H1 (cell line): ENCODE measurements at regions of chr3 and their contacts with region 1.

Region 1: DNA sequence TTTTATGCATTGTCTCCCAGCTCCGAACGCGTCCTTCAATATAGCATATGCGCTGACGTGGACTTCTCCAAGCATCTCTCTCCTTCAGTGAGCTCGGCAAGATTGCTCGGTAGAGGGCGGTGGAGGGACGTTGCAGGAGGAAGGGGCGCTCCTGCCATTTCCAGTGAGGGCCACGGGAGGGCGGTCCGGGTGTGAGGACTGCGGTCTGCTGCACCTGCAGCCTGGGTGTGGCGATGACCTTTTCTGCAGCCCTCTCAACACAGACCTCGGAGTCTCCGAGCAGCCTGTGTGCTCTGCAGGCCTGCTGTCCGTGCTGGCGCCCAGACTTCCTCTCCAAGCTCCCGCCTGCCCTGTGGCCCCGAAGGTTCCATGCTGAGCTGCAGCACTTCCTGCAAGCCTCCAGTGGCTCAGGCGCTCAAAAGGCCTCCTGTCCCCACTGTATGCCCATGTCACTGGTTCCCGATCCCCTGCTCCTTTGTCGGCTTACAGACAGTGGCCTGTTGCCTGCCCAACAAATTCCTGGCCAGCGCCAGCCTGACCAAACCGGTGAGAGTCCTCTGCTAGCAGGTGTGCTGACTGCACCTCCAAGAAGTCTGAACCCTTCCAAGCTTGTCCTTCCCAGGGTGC is 8.9 kb upstream of the RTP3 start:
- DNase-seq: peak; percentile 92 to 98
- H3K4me3 ChIP-seq: no peak overlapping the region
- H3K27ac ChIP-seq: no peak overlapping the region
- H3K4me1 ChIP-seq: peaks cover 4 to 8% (median 6%) of the 10 kb centered on the region in 4 experiments; a peak in 6 of 7 replicates
- H3K27me3 ChIP-seq: no peaks in the 10 kb centered on the region; a peak in 2 of 7 replicates
- CTCF ChIP-seq: peak; percentile 100
- EP300 ChIP-seq: peak; percentile 10 to 47; a peak in 2 of 3 replicates
- POLR2A ChIP-seq: no peak
- RAD21 ChIP-seq: peak; percentile 99 to 100

Region 2: GRCh38 chr3:46359733-46360493 is 128.9 kb before region 1 on chr3:
- CTCF ChIA-PET with region 1: no interaction called
- POLR2A ChIA-PET with region 1: no interaction called
- DNase-seq: no peak
- H3K4me3 ChIP-seq: no peak overlapping the region
- H3K27ac ChIP-seq: no peak overlapping the region
- H3K4me1 ChIP-seq: no peaks in the 10 kb centered on the region
- H3K27me3 ChIP-seq: no peaks in the 10 kb centered on the region
- CTCF ChIP-seq: no peak
- EP300 ChIP-seq: no peak
- POLR2A ChIP-seq: no peak
- RAD21 ChIP-seq: no peak

Region 3: GRCh38 chr3:46386206-46386605 is 102.6 kb before region 1 on chr3:
- CTCF ChIA-PET with region 1: no interaction called
- POLR2A ChIA-PET with region 1: no interaction called
- DNase-seq: no peak
- H3K4me3 ChIP-seq: no peak overlapping the region
- H3K27ac ChIP-seq: no peak overlapping the region
- H3K4me1 ChIP-seq: peaks cover 0 to 8% (median under 1%) of the 10 kb centered on the region in 4 experiments; a peak in 2 of 7 replicates
- H3K27me3 ChIP-seq: no peaks in the 10 kb centered on the region
- CTCF ChIP-seq: no peak
- EP300 ChIP-seq: no peak
- POLR2A ChIP-seq: no peak
- RAD21 ChIP-seq: no peak

Region 4: DNA sequence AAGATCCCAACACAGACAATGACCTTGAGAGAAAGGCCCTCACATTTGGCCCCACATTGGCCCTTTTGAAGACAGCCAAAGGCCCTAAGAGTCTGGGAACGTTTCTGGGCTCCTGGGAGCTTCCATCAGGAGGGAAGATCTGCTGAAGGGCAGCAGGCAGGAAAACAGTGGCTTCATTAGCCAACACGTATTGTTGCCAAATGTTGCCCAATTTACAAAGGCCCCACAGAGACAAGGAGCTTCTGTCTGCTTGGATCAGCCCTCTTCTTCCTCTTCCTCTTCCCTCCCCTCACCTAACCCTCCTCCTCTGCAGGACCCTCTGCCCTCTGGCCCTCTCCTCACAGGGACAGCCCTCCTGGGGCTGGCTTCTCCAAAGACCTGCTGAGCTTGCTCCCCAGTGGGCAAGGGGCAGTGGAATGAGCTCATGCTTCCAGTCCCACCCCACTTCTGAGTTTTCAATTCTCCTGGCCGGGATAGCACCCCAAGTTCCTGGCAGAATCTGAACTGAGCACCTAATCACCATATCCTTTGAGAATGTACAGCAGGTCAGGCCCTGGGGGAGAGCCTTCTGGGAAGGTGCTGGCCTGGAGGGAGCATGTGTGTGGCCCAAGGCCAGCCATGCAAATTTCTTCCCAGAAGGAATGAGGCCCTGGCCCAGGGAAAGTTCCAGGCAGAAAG is 19.0 kb before region 1 on chr3:
- CTCF ChIA-PET with region 1: interaction called, 38 read pairs
- POLR2A ChIA-PET with region 1: no interaction called
- DNase-seq: peak in 1 of 2 experiments; percentile 27
- H3K4me3 ChIP-seq: no peak overlapping the region
- H3K27ac ChIP-seq: no peak overlapping the region
- H3K4me1 ChIP-seq: peaks cover 0 to 5% (median 2%) of the 10 kb centered on the region in 4 experiments; a peak in 4 of 7 replicates
- H3K27me3 ChIP-seq: peaks cover 3 to 11% (median 9%) of the 10 kb centered on the region in 4 experiments
- CTCF ChIP-seq: no peak
- EP300 ChIP-seq: no peak
- POLR2A ChIP-seq: no peak
- RAD21 ChIP-seq: no peak

Region 5: GRCh38 chr3:46542801-46543201 is 54.0 kb after region 1 on chr3:
- CTCF ChIA-PET with region 1: interaction called, 20 read pairs
- POLR2A ChIA-PET with region 1: interaction called, 3 read pairs
- DNase-seq: no peak
- H3K4me3 ChIP-seq: no peak overlapping the region
- H3K27ac ChIP-seq: 0 out of 2 replicates have a peak overlapping the region, but pooled peaks have one; percentile 5
- H3K4me1 ChIP-seq: peaks cover 14 to 21% (median 18%) of the 10 kb centered on the region in 4 experiments
- H3K27me3 ChIP-seq: no peaks in the 10 kb centered on the region
- CTCF ChIP-seq: no peak
- EP300 ChIP-seq: no peak
- POLR2A ChIP-seq: no peak
- RAD21 ChIP-seq: no peak

Region 6: DNA sequence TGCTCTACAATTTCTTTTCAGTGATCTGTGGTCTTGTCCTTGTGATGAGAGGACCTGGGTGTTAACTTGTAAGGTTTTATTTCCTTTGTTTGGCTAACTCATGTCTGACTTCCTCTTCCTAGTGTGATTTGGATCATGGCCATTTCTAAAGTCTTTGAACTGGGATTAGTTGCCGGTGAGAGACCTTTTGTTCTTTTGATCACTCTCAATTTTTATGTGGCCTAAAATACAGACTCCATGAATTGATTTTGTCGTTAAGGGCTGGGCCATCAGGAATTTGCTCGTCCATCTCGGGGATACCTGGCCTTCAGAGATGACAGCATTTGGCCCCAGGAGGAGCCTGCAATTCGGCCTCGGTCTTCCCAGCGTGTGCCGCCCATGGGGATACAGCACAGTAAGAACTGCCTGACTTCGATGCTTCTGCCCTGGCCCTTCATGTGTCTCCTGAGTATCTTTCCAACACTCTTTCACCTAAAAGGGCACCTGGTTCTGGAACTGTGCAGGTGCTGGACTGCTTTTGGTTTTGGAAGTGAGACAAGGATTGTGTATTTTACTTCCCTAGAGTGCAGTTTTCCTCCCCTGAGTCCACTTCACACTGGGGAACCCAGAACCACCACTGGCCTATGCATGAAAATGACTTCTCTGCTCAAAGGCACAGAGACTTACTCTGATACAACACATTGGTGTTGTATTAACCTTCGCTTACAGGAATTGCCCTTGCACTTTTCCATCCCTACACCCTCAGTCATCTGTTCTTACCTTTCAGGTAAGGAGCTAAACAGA is 90.3 kb after region 1 on chr3:
- CTCF ChIA-PET with region 1: interaction called, 26 read pairs
- POLR2A ChIA-PET with region 1: interaction called, 49 read pairs
- DNase-seq: no peak
- H3K4me3 ChIP-seq: peak overlapping the region; percentile 54 to 97 (median 76)
- H3K27ac ChIP-seq: peak overlapping the region; percentile 8; the same call in 1 of the 2 replicates
- H3K4me1 ChIP-seq: peaks cover 9 to 25% (median 15%) of the 10 kb centered on the region in 4 experiments; a peak in 6 of 7 replicates
- H3K27me3 ChIP-seq: no peaks in the 10 kb centered on the region; a peak in 2 of 7 replicates
- CTCF ChIP-seq: no peak
- EP300 ChIP-seq: no peak
- POLR2A ChIP-seq: no peak
- RAD21 ChIP-seq: no peak

Region 7: GRCh38 chr3:46619845-46620778 is 131.3 kb after region 1 on chr3:
- CTCF ChIA-PET with region 1: interaction called, 16 read pairs
- POLR2A ChIA-PET with region 1: no interaction called
- DNase-seq: peak in 1 of 2 experiments; percentile 43
- H3K4me3 ChIP-seq: no peak overlapping the region
- H3K27ac ChIP-seq: no peak overlapping the region
- H3K4me1 ChIP-seq: peaks cover 0 to 7% (median 3%) of the 10 kb centered on the region in 4 experiments; a peak in 3 of 7 replicates
- H3K27me3 ChIP-seq: no peaks in the 10 kb centered on the region
- CTCF ChIP-seq: no peak
- EP300 ChIP-seq: no peak
- POLR2A ChIP-seq: no peak
- RAD21 ChIP-seq: no peak

Region 8: DNA sequence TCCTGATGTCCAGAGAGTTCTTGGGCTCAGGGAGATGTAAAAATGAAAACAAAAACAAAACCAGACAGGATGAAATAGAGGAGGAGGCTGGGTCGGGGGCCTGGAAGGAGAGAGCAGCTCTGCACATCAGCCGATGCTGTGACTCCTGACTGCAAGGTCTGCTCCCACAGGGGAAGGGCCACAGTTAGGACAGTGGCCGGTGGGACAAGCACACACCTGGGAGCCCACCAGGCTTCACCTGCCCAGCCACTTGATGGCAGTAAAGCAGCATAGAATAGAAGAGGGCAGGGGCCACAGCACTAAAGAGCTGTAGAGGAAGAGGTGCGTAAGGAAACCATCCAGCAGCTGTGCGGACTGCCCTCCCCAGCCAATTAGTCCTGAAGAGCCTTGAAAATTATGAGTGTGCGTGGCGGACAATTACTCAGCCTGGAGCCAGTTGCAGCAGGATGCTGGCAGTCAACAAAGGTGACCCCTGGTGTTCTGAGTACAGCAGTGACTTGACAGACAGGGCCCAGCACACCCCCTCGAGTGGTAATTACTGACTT is 174.8 kb after region 1 on chr3:
- CTCF ChIA-PET with region 1: interaction called, 20 read pairs
- POLR2A ChIA-PET with region 1: interaction called, 3 read pairs
- DNase-seq: peak in 1 of 2 experiments; percentile 62
- H3K4me3 ChIP-seq: no peak overlapping the region
- H3K27ac ChIP-seq: no peak overlapping the region
- H3K4me1 ChIP-seq: peaks cover 22 to 41% (median 28%) of the 10 kb centered on the region in 4 experiments
- H3K27me3 ChIP-seq: no peaks in the 10 kb centered on the region; a peak in 1 of 7 replicates
- CTCF ChIP-seq: peak in 2 of 3 experiments; percentile 63 to 70; a peak in 3 of 4 replicates
- EP300 ChIP-seq: no peak
- POLR2A ChIP-seq: no peak
- RAD21 ChIP-seq: peak; percentile 72 to 83

Region 9: GRCh38 chr3:46695177-46695961 is 206.5 kb after region 1 on chr3:
- CTCF ChIA-PET with region 1: interaction called, 25 read pairs
- POLR2A ChIA-PET with region 1: interaction called, 3 read pairs
- DNase-seq: peak in 1 of 2 experiments; percentile 78
- H3K4me3 ChIP-seq: no peak overlapping the region
- H3K27ac ChIP-seq: no peak overlapping the region
- H3K4me1 ChIP-seq: peaks cover 0 to 24% (median 19%) of the 10 kb centered on the region in 4 experiments; a peak in 6 of 7 replicates
- H3K27me3 ChIP-seq: peaks cover 2 to 35% (median 21%) of the 10 kb centered on the region in 4 experiments
- CTCF ChIP-seq: peak in 2 of 3 experiments; percentile 71 to 86; a peak in 3 of 4 replicates
- EP300 ChIP-seq: no peak
- POLR2A ChIP-seq: no peak
- RAD21 ChIP-seq: peak; percentile 52 to 62